Heart left ventricle (tissue), 16 donors: ENCODE measurements at regions of chr5 and their contacts with region 1.

Region 1: GRCh38 chr5:58460732-58461286 is 923 bp upstream of the PLK2 start:
- DNase-seq: peak; percentile 91 to 95 (median 93)
- ATAC-seq: peak; percentile 81 to 86 (median 82)
- H3K4me3 ChIP-seq: peak overlapping the region; percentile 59 to 97 (median 85)
- H3K27ac ChIP-seq: peak overlapping the region; percentile 93 to 99 (median 98)
- H3K4me1 ChIP-seq: peaks cover 0 to 24% (median 9%) of the 10 kb centered on the region in 12 donors
- H3K27me3 ChIP-seq: no peaks in the 10 kb centered on the region
- CTCF ChIP-seq: peak; percentile 71 to 88 (median 82)
- POLR2A ChIP-seq: no peak

Region 2: DNA sequence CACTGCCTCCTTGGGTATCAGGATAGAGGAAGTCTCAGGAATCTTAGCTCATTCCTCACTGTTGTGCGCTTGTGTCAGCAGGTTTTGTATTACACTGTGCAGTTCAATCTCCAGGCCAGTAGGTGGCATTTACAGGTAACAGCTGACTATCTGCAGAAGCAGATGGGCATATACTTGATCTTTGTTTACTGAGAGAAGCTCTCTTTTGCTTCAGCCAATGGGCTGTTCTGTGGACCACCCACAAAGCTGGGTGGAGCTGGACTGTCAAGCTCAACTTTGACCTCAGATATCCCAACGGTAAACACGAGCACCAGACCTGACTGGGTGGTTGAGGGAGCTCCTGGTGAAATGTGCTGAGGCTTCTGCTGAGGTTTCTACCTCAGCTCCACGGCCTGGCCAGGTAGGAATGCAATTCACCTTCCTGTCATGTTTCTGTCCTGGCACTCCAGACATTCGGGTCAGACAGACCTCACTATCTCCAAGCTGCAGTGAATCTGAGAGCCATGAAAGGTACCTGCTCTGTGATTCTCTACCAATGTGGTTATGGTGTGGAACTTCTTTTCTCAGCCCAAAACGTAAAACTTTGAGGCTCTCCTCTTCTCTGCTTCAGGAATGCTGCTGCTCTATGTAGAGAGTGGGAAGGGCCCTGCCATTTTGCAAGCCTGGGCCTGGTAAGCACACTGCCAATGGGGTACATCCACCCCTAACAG is 810.3 kb before region 1 on chr5:
- intact Hi-C with region 1: loop called in 5 of 10 experiments (anchors 5 kb)
- DNase-seq: no peak
- ATAC-seq: peak in 2 of 4 donors; percentile 50 to 61
- H3K4me3 ChIP-seq: no peak overlapping the region
- H3K27ac ChIP-seq: no peak overlapping the region
- H3K4me1 ChIP-seq: peaks cover 0 to 16% (median 0%) of the 10 kb centered on the region in 12 donors
- H3K27me3 ChIP-seq: no peaks in the 10 kb centered on the region
- CTCF ChIP-seq: peak; percentile 33 to 61 (median 51)
- POLR2A ChIP-seq: no peak

Region 3: GRCh38 chr5:57887851-57888621 is 572.8 kb before region 1 on chr5:
- intact Hi-C with region 1: loop called (anchors 1 to 5 kb)
- DNase-seq: peak in 4 of 5 donors; percentile 47 to 64 (median 60)
- ATAC-seq: peak; percentile 76 to 96 (median 93)
- H3K4me3 ChIP-seq: no peak overlapping the region
- H3K27ac ChIP-seq: peak overlapping the region in 2 of 12 donors; percentile 1 to 32
- H3K4me1 ChIP-seq: peaks cover 0 to 19% (median 6%) of the 10 kb centered on the region in 12 donors
- H3K27me3 ChIP-seq: no peaks in the 10 kb centered on the region
- CTCF ChIP-seq: peak; percentile 39 to 82 (median 66)
- POLR2A ChIP-seq: no peak

Region 4: GRCh38 chr5:58156986-58157701 is 303.7 kb before region 1 on chr5:
- intact Hi-C with region 1: loop called in 1 of 10 experiments (anchors 10 kb)
- DNase-seq: peak in 4 of 5 donors; percentile 54 to 60 (median 56)
- ATAC-seq: peak in 2 of 4 donors; percentile 82 to 93
- H3K4me3 ChIP-seq: no peak overlapping the region
- H3K27ac ChIP-seq: peak overlapping the region in 5 of 12 donors; percentile 14 to 56 (median 47)
- H3K4me1 ChIP-seq: peaks cover 0 to 24% (median 9%) of the 10 kb centered on the region in 12 donors
- H3K27me3 ChIP-seq: no peaks in the 10 kb centered on the region
- CTCF ChIP-seq: no peak
- POLR2A ChIP-seq: no peak

Region 5: GRCh38 chr5:58240286-58240685 is 220.5 kb before region 1 on chr5:
- intact Hi-C with region 1: loop called in 5 of 10 experiments (anchors 5 to 10 kb)
- DNase-seq: no peak
- ATAC-seq: no peak
- H3K4me3 ChIP-seq: no peak overlapping the region
- H3K27ac ChIP-seq: peak overlapping the region in 8 of 12 donors; percentile 14 to 84 (median 63)
- H3K4me1 ChIP-seq: peaks cover 0 to 40% (median 7%) of the 10 kb centered on the region in 12 donors
- H3K27me3 ChIP-seq: no peaks in the 10 kb centered on the region
- CTCF ChIP-seq: no peak
- POLR2A ChIP-seq: no peak

Region 6: DNA sequence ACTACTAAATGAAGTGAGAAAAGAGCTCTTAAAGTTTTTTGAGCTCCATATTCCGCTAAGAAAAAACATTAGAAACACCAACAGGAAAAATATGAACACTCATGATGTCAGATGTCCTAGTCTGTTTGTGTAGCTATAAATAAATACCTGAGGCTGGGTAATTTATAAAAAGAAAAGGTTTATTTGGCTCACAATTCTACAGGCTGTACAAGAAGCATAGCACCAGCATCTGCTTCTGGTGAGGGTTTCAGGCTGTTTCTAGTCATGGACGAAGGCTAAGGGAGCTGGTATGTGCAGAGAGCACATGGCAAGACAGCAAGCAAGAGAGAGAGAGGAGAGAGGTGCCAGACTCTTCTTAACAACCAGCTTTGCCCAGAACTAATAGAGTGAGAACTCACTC is 187.1 kb before region 1 on chr5:
- intact Hi-C with region 1: loop called in 4 of 10 experiments (anchors 5 to 10 kb)
- DNase-seq: no peak
- ATAC-seq: peak in 1 of 4 donors; percentile 49
- H3K4me3 ChIP-seq: no peak overlapping the region
- H3K27ac ChIP-seq: peak overlapping the region in 9 of 12 donors; percentile 1 to 61 (median 32)
- H3K4me1 ChIP-seq: peaks cover 0 to 12% (median 5%) of the 10 kb centered on the region in 12 donors
- H3K27me3 ChIP-seq: no peaks in the 10 kb centered on the region
- CTCF ChIP-seq: no peak
- POLR2A ChIP-seq: no peak

Region 7: GRCh38 chr5:58353681-58354391 is 107.0 kb before region 1 on chr5:
- intact Hi-C with region 1: no loop called
- DNase-seq: no peak
- ATAC-seq: no peak
- H3K4me3 ChIP-seq: no peak overlapping the region
- H3K27ac ChIP-seq: no peak overlapping the region
- H3K4me1 ChIP-seq: no peaks in the 10 kb centered on the region
- H3K27me3 ChIP-seq: no peaks in the 10 kb centered on the region
- CTCF ChIP-seq: no peak
- POLR2A ChIP-seq: no peak

Region 8: GRCh38 chr5:58394339-58394738 is 66.5 kb before region 1 on chr5:
- intact Hi-C with region 1: no loop called
- DNase-seq: no peak
- ATAC-seq: no peak
- H3K4me3 ChIP-seq: no peak overlapping the region
- H3K27ac ChIP-seq: no peak overlapping the region
- H3K4me1 ChIP-seq: no peaks in the 10 kb centered on the region
- H3K27me3 ChIP-seq: no peaks in the 10 kb centered on the region
- CTCF ChIP-seq: no peak
- POLR2A ChIP-seq: no peak

Region 9: GRCh38 chr5:58424181-58424580 is 36.6 kb before region 1 on chr5:
- intact Hi-C with region 1: no loop called
- DNase-seq: no peak
- ATAC-seq: no peak
- H3K4me3 ChIP-seq: no peak overlapping the region
- H3K27ac ChIP-seq: no peak overlapping the region
- H3K4me1 ChIP-seq: no peaks in the 10 kb centered on the region
- H3K27me3 ChIP-seq: no peaks in the 10 kb centered on the region
- CTCF ChIP-seq: no peak
- POLR2A ChIP-seq: no peak